Ascending aorta (tissue), 2 donors: ENCODE measurements at regions of chr22 and their contacts with region 1.

Region 1: GRCh38 chr22:28442264-28442710 is 237.4 kb downstream of the TTC28 start:
- DNase-seq: peak in 1 of 2 donors; percentile 83
- H3K4me3 ChIP-seq: peak overlapping the region; percentile 59 to 83
- H3K27ac ChIP-seq: peak overlapping the region; percentile 73 to 87
- H3K4me1 ChIP-seq: peaks cover 0 to 35% of the 10 kb centered on the region in 2 donors
- H3K27me3 ChIP-seq: no peaks in the 10 kb centered on the region
- CTCF ChIP-seq: peak; percentile 64 to 68 (median 68)

Region 2: GRCh38 chr22:28019881-28020871 is 422.1 kb before region 1 on chr22:
- intact Hi-C with region 1: loop called (anchors 10 kb)
- DNase-seq: peak in 1 of 2 donors; percentile 81
- H3K4me3 ChIP-seq: no peak overlapping the region
- H3K27ac ChIP-seq: no peak overlapping the region
- H3K4me1 ChIP-seq: no peaks in the 10 kb centered on the region
- H3K27me3 ChIP-seq: no peaks in the 10 kb centered on the region
- CTCF ChIP-seq: peak; percentile 78 to 95 (median 92)

Region 3: GRCh38 chr22:28051787-28052356 is 390.4 kb before region 1 on chr22:
- intact Hi-C with region 1: loop called (anchors 10 kb)
- DNase-seq: peak in 1 of 2 donors; percentile 77
- H3K4me3 ChIP-seq: no peak overlapping the region
- H3K27ac ChIP-seq: no peak overlapping the region
- H3K4me1 ChIP-seq: no peaks in the 10 kb centered on the region
- H3K27me3 ChIP-seq: no peaks in the 10 kb centered on the region
- CTCF ChIP-seq: peak; percentile 74 to 89 (median 81)

Region 4: GRCh38 chr22:28375761-28376534 is 66.3 kb before region 1 on chr22:
- intact Hi-C with region 1: loop called (anchors 5 kb)
- DNase-seq: no peak
- H3K4me3 ChIP-seq: no peak overlapping the region
- H3K27ac ChIP-seq: no peak overlapping the region
- H3K4me1 ChIP-seq: peaks cover 0 to 2% of the 10 kb centered on the region in 2 donors
- H3K27me3 ChIP-seq: no peaks in the 10 kb centered on the region
- CTCF ChIP-seq: no peak

Region 5: GRCh38 chr22:28408709-28409108 is 33.6 kb before region 1 on chr22:
- intact Hi-C with region 1: no loop called
- DNase-seq: no peak
- H3K4me3 ChIP-seq: no peak overlapping the region
- H3K27ac ChIP-seq: no peak overlapping the region
- H3K4me1 ChIP-seq: peaks cover 0 to 20% of the 10 kb centered on the region in 2 donors
- H3K27me3 ChIP-seq: no peaks in the 10 kb centered on the region
- CTCF ChIP-seq: no peak

Region 6: GRCh38 chr22:28474330-28474729 is 32.0 kb after region 1 on chr22:
- intact Hi-C with region 1: no loop called
- DNase-seq: no peak
- H3K4me3 ChIP-seq: no peak overlapping the region
- H3K27ac ChIP-seq: no peak overlapping the region
- H3K4me1 ChIP-seq: no peaks in the 10 kb centered on the region
- H3K27me3 ChIP-seq: no peaks in the 10 kb centered on the region
- CTCF ChIP-seq: no peak